ENCODE measurements at regions of chr10 and their contacts with region 1.

Region 1: GRCh38 chr10:52308251-52309031 is 5.6 kb upstream of the DKK1 start:
- DNase-seq: peak; percentile 62 to 80
- ATAC-seq: peak; percentile 83 to 91
- H3K4me3 ChIP-seq: peak overlapping the region; percentile 48
- H3K27ac ChIP-seq: peak overlapping the region; percentile 81 to 82
- H3K4me1 ChIP-seq: peaks cover 24% of the 10 kb centered on the region; the same call in 2 of the 3 replicates
- CTCF ChIP-seq: peak; percentile 94
- EP300 ChIP-seq: no peak
- POLR2A ChIP-seq: peak; percentile 19; the same call in 1 of the 2 replicates
- RAD21 ChIP-seq: peak; percentile 96 to 99

Region 2: GRCh38 chr10:52146766-52147165 is 161.7 kb before region 1 on chr10:
- CTCF ChIA-PET with region 1: no interaction called
- POLR2A ChIA-PET with region 1: no interaction called
- DNase-seq: peak in 1 of 2 experiments; percentile 4
- ATAC-seq: no peak
- H3K4me3 ChIP-seq: no peak overlapping the region
- H3K27ac ChIP-seq: no peak overlapping the region
- H3K4me1 ChIP-seq: no peaks in the 10 kb centered on the region; the same call in 2 of the 3 replicates
- CTCF ChIP-seq: no peak
- EP300 ChIP-seq: no peak
- POLR2A ChIP-seq: no peak
- RAD21 ChIP-seq: no peak

Region 3: GRCh38 chr10:52297747-52298146 is 10.7 kb before region 1 on chr10:
- CTCF ChIA-PET with region 1: interaction called, 10 read pairs
- POLR2A ChIA-PET with region 1: no interaction called
- DNase-seq: no peak
- ATAC-seq: no peak
- H3K4me3 ChIP-seq: no peak overlapping the region
- H3K27ac ChIP-seq: no peak overlapping the region
- H3K4me1 ChIP-seq: no peaks in the 10 kb centered on the region
- CTCF ChIP-seq: no peak
- EP300 ChIP-seq: no peak
- POLR2A ChIP-seq: no peak
- RAD21 ChIP-seq: no peak

Region 4: GRCh38 chr10:52466464-52466863 is 158.0 kb after region 1 on chr10:
- CTCF ChIA-PET with region 1: interaction called, 12 read pairs
- POLR2A ChIA-PET with region 1: no interaction called
- DNase-seq: no peak
- ATAC-seq: no peak
- H3K4me3 ChIP-seq: no peak overlapping the region
- H3K27ac ChIP-seq: peak overlapping the region; percentile 4 to 61; a peak in 3 of 6 replicates
- H3K4me1 ChIP-seq: peaks cover 6% of the 10 kb centered on the region
- CTCF ChIP-seq: no peak
- EP300 ChIP-seq: no peak
- POLR2A ChIP-seq: no peak
- RAD21 ChIP-seq: no peak

Region 5: GRCh38 chr10:52551046-52551445 is 242.6 kb after region 1 on chr10:
- CTCF ChIA-PET with region 1: interaction called, 11 read pairs
- POLR2A ChIA-PET with region 1: no interaction called
- DNase-seq: no peak
- ATAC-seq: no peak
- H3K4me3 ChIP-seq: no peak overlapping the region
- H3K27ac ChIP-seq: no peak overlapping the region
- H3K4me1 ChIP-seq: no peaks in the 10 kb centered on the region
- CTCF ChIP-seq: no peak
- EP300 ChIP-seq: no peak
- POLR2A ChIP-seq: no peak
- RAD21 ChIP-seq: no peak

Region 6: DNA sequence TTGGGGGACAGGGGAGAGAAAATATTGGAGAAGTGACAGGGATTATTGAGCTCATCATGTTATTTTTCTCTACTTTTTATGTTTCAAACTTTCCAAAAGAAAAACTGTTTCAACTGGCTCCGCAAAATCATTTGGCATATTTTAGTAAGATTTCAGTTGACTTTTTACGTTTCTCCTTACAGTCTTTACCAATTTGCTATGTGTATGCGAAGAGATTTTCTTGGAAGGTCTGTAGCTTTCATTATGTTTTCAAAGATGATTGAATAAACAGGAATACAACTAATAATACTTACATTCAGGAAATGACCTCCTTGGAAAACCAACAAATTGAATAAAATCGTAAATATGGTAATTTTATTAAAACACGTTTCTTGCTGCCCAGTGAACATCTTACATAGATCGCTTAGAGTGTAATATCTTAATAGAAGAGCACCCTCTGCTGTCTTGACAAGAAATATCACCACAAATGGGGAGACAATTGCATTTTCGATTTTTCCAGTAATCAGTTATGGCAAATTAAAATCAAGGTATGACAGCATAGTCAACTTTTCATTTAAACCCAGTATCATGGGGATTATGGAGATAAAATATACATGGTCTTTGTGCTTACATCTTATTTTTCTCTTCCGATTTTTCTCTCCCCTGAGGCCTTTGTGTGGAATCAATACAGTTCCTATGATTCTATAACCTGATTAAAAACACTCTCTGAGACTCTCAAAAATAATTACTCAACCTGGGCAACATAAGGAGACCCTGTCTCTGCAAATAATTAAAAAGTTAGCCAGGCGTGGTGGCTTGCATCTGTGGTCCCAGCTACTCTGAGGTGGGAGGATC is 421.0 kb after region 1 on chr10:
- CTCF ChIA-PET with region 1: interaction called, 20 read pairs
- POLR2A ChIA-PET with region 1: no interaction called
- DNase-seq: peak; percentile 35 to 36
- ATAC-seq: peak; percentile 80 to 85; a peak in 5 of 6 replicates
- H3K4me3 ChIP-seq: no peak overlapping the region
- H3K27ac ChIP-seq: no peak overlapping the region
- H3K4me1 ChIP-seq: no peaks in the 10 kb centered on the region
- CTCF ChIP-seq: peak; percentile 68
- EP300 ChIP-seq: no peak
- POLR2A ChIP-seq: no peak
- RAD21 ChIP-seq: peak; percentile 74 to 76

Measured in A549 (cell line).